Activated T-helper 1 cell treated with anti-CD3 and anti-CD28 coated beads, Interleukin-12 subunit alpha, Interleukin-12 subunit beta, Interleukin-2, Interleukin-4 antibody, amounts not matched to agents 30 ng/mL and 10 ng/mL and 1 ng/mL, durations not matched to agents 14 hours and 24 hours and 36 hours (primary cell): ENCODE measurements at regions of chr17 and their contacts with region 1.

Region 1: GRCh38 chr17:81512560-81513371 is at the start of gene ACTG1:
- DNase-seq: peak; percentile 88
- H3K4me3 Mint-ChIP-seq: peak within 1 kb of the TSS; percentile 100
- H3K27ac Mint-ChIP-seq: peak within 1 kb of the TSS; percentile 94
- H3K4me1 Mint-ChIP-seq: peaks cover 24% of the 10 kb centered on the region
- H3K27me3 Mint-ChIP-seq: no peaks in the 10 kb centered on the region
- total RNA-seq, gene ACTG1: 3,516 TPM in 2 replicates

Region 2: GRCh38 chr17:81253358-81254131 is 259.2 kb before region 1 on chr17:
- intact Hi-C with region 1: loop called (anchors 2 kb)
- DNase-seq: peak; percentile 38
- H3K4me3 Mint-ChIP-seq: no peak overlapping the region
- H3K27ac Mint-ChIP-seq: peak overlapping the region; percentile 14
- H3K4me1 Mint-ChIP-seq: no peaks in the 10 kb centered on the region
- H3K27me3 Mint-ChIP-seq: no peaks in the 10 kb centered on the region

Region 3: GRCh38 chr17:81394921-81395599 is 117.7 kb before region 1 on chr17 and contains the start of gene BAHCC1:
- intact Hi-C with region 1: loop called (anchors 2 kb)
- DNase-seq: peak; percentile 62
- H3K4me3 Mint-ChIP-seq: peak within 1 kb of the TSS; percentile 74
- H3K27ac Mint-ChIP-seq: peak within 1 kb of the TSS; percentile 63
- H3K4me1 Mint-ChIP-seq: peaks cover 20% of the 10 kb centered on the region
- H3K27me3 Mint-ChIP-seq: peaks cover 43% of the 10 kb centered on the region
- total RNA-seq, gene BAHCC1: 0.02 and 0.08 TPM in 2 replicates

Region 4: GRCh38 chr17:81484195-81484979 is 28.4 kb before region 1 on chr17:
- intact Hi-C with region 1: loop called (anchors 1 kb)
- DNase-seq: peak; percentile 86
- H3K4me3 Mint-ChIP-seq: no peak overlapping the region
- H3K27ac Mint-ChIP-seq: no peak overlapping the region
- H3K4me1 Mint-ChIP-seq: no peaks in the 10 kb centered on the region
- H3K27me3 Mint-ChIP-seq: peaks cover 30% of the 10 kb centered on the region

Region 5: GRCh38 chr17:81527591-81528383 is 15.0 kb after region 1 on chr17 and contains the start of gene FSCN2:
- intact Hi-C with region 1: no loop called
- DNase-seq: no peak
- H3K4me3 Mint-ChIP-seq: no peak within 1 kb of the TSS
- H3K27ac Mint-ChIP-seq: no peak within 1 kb of the TSS
- H3K4me1 Mint-ChIP-seq: no peaks in the 10 kb centered on the region
- H3K27me3 Mint-ChIP-seq: peaks cover 4% of the 10 kb centered on the region
- total RNA-seq, gene FSCN2: 0.52 and 0.64 TPM in 2 replicates

Region 6: DNA sequence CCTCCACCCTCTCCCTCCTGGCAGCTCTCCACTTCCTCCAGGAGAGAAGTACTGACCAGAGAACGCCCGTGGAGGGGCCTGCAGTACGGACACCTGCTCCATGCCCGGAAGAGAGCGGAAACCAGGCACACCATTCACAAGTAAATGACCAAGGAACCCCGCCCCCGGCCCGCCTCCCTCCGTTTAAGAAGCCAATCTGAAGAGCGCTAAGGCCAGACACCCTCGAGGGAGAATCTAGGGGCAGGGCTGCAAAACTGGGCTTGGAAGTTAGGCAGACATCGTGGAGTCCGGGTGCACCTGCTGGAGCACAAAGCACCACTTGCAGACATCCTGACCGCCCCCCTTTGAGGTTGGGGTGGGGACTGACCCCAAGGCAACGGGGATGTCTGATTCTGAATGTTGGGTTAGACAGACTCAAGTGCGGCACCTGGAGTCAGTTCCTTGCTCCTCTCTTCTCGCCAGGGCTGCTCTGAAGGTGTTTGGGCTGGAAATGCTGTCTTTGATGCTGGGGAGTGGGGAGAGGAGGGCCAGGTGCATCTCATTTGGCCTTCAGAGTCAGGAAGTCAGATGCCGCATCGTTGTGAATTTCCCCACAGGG is 40.4 kb after region 1 on chr17:
- intact Hi-C with region 1: loop called (anchors 1 kb)
- DNase-seq: peak; percentile 67
- H3K4me3 Mint-ChIP-seq: peak overlapping the region; percentile 92
- H3K27ac Mint-ChIP-seq: peak overlapping the region; percentile 91
- H3K4me1 Mint-ChIP-seq: peaks cover 41% of the 10 kb centered on the region
- H3K27me3 Mint-ChIP-seq: no peaks in the 10 kb centered on the region

Region 7: DNA sequence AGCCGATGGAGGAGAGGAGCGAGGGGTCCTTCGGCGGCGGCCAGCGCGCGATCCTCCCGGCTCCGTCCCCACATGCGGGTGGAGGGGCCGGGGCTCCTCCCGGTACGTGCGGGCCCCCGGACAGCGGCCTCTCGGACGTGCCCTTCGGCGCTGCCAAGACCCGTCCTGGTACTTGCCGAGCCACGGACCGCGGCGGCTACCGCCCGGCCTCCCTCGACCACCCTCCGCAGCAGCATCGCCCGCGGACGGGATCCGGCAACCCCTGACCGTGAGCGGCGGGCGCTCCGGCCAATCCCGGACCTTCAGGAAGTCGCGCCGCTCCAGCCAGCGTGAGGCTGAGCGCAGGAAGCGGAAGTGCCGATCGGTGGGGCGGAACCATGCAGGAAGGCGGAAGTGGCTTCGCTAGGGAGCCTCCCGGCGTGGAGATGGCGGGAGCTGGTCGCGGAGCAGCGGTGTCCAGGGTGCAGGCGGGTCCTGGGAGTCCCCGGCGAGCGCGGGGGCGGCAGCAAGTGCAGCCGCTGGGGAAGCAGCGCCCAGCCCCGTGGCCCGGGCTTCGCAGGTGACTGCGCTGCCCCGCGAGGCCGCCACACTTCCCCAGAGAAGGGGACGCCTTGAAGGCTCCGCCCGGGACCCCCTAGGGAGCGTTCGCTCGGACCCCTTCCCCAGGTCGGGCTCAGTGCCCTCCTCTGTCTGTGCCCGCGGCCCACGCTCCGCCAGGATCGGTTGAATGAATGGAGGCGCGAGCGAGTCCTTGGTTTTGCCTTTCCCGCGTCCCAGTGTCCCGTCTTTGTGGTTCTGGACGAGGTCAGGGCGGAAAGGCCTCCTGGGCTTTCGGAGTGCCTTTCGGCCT is 153.8 kb after region 1 on chr17 and contains the starts of genes CCDC137 and OXLD1:
- intact Hi-C with region 1: loop called (anchors 1 kb)
- DNase-seq: peak; percentile 93
- H3K4me3 Mint-ChIP-seq: peak within 1 kb of the TSS; percentile 99
- H3K27ac Mint-ChIP-seq: peak within 1 kb of the TSS; percentile 98
- H3K4me1 Mint-ChIP-seq: peaks cover 32% of the 10 kb centered on the region
- H3K27me3 Mint-ChIP-seq: no peaks in the 10 kb centered on the region
- total RNA-seq, gene CCDC137: 59.3 and 62.1 TPM in 2 replicates
- total RNA-seq, gene OXLD1: 54.3 and 57.5 TPM in 2 replicates